HepG2 (cell line): ENCODE measurements at regions of chr11 and their contacts with region 1.

Region 1: DNA sequence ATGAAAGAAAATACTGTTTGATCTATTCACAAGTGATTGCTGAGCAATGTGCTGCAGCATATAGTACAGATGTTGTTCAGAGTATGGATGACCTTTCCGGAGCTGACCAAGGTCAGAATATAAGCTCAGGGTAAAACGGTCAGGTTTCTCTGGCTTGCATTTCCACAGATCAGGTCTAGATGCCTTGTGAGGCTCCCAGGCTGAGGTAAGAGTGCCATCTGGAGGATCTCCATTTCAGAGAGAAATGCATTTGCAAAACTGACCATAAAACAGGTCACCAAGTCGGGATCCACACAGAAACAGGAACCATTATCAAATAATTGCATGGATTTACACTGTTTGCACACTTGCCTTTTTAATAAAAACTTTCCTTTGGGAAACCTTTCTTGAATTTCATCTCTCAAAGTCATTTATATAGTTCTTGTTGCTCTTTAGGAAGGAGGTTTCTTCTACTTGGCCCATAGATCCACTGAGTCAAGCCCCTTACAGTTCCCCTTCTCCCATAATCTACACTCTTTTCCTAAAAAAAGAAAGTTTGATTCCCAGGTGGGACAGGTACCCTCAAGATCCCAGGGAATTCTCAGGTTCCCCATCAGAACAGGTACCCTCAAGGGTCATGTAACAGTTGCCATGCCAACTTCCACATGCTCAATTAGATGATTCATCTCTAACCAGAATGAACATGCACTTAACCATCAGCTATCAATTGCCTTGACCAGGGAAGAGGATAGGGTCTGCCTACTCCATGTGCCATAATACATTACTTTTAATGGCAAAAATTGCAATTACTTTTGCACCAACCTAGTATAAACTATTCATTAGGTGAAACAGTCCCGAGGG is 25.0 kb upstream of the TMPRSS5 start:
- DNase-seq: peak; percentile 47
- ATAC-seq: peak; percentile 87
- H3K4me3 ChIP-seq: no peak overlapping the region
- H3K27ac ChIP-seq: no peak overlapping the region
- H3K4me1 ChIP-seq: peaks cover 3% of the 10 kb centered on the region
- H3K27me3 ChIP-seq: no peaks in the 10 kb centered on the region
- CTCF ChIP-seq: peak; percentile 79
- EP300 ChIP-seq: no peak
- POLR2A ChIP-seq: no peak
- RAD21 ChIP-seq: peak; percentile 55

Region 2: DNA sequence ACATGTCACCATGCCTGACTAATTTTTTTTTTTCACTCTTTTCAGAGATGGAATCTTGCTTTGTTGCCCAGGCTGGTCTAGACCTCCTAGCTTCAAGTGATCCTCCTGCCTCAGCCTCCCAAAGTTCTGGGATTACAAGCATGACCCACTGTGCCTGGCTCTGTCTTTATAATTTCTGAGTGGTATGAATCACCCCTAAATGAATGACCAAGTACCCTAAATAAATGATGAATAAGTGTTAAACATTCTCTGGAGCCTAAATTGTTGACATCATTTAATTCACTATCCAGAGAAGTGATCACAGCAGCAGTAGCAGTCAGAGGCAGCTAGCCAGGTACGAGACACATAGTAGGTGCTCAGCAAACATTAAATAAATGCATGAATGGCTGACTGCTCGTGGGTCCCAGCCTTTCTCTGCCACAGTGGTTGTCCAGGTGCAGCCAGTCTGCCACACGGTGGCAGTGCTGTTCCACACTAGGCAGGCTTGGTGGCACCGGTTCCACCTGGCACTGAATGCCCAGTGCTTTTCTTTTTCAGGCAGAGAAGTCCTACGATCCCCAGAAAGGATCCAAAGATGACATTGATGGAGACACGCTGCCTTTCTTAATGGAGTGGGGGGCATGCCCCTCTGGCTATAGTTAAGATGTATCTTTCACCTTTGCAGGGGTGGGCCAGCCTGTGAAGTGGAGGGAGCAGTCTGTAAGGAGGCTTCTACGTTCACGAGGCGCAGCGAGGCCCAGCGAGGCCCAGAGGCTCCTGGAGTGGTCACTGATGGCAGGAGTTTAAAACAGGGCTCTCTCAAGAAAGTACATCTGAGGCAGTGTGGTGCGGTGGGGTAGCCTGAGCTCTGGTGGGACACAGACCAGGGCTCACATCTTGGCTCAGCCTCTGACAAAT is 425.4 kb before region 1 on chr11:
- CTCF ChIA-PET with region 1: interaction called, 6 read pairs
- POLR2A ChIA-PET with region 1: no interaction called
- in situ Hi-C with region 1: loop called (anchors 5 kb)
- intact Hi-C with region 1: loop called (anchors 1 kb)
- DNase-seq: peak; percentile 32
- ATAC-seq: peak; percentile 94
- H3K4me3 ChIP-seq: no peak overlapping the region
- H3K27ac ChIP-seq: no peak overlapping the region
- H3K4me1 ChIP-seq: no peaks in the 10 kb centered on the region
- H3K27me3 ChIP-seq: no peaks in the 10 kb centered on the region
- CTCF ChIP-seq: peak; percentile 97
- EP300 ChIP-seq: no peak
- POLR2A ChIP-seq: no peak
- RAD21 ChIP-seq: peak; percentile 87

Region 3: DNA sequence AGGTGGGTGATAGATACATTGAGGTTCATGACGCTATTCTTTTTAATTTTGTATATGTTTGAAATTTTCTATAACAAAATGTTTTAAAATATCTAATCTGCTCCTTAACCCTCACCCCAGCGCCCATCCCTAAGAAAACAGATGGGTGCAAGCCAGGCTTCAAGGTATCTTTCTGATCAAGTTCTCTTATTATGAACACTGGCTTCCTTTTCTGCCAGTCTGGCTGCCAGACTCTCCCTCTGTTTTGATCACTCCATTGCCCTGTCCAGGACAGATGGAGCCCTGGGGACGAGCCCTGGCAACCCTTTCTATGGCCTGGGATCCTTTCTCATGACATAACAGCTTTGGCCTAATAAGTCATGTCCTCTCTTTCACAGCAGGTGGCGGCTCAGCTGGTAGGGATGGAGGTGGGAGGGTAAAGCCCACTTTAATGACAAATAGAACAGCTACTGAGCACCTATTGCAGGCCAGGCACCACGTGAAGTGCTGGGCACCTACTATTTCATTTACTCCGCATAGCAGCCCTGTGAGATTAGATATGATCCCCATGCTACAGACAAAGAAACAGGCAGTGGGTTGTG is 294.3 kb before region 1 on chr11:
- CTCF ChIA-PET with region 1: no interaction called
- POLR2A ChIA-PET with region 1: no interaction called
- in situ Hi-C with region 1: no loop called
- intact Hi-C with region 1: loop called (anchors 5 kb)
- DNase-seq: no peak
- ATAC-seq: peak; percentile 31; the same call in 1 of the 3 replicates
- H3K4me3 ChIP-seq: no peak overlapping the region
- H3K27ac ChIP-seq: no peak overlapping the region
- H3K4me1 ChIP-seq: no peaks in the 10 kb centered on the region
- H3K27me3 ChIP-seq: peaks cover 0 to 7% of the 10 kb centered on the region in 2 experiments; a peak in 1 of 5 replicates
- CTCF ChIP-seq: no peak
- EP300 ChIP-seq: no peak
- POLR2A ChIP-seq: no peak
- RAD21 ChIP-seq: no peak

Region 4: DNA sequence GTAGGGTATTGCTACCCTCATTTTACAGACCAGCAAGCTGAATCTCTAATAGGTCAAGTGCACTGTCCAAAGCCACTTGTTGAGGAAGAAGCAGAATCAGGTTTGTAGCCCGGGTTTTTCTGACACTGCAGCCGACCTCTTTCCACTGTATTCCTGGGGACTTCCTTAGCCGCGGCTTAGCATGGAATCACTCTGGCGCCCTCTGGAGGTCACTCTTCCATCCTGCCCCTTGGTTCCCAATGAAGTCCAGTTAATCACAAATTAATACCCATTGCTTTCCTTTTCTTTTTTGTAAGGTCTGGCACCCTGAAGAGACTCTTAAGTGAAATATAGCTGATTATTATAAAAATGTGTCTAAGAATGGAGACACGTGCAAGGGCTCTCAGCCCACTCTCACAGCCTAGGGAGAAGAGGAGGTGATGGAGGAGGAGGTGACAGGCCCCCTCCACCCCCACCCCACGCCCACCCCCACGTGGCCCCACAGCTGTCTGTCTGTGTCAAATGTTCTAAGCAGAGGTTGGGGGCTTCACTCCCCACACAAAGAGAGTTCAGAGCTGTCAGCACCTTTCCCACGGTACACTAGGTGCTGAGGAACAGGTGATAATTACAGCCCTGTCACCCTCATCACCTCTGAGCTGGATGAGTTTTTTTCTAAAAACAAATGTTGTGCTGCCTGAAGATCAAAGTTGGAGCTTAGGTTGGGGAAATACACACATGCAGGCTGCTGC is 198.2 kb before region 1 on chr11:
- CTCF ChIA-PET with region 1: no interaction called
- POLR2A ChIA-PET with region 1: no interaction called
- in situ Hi-C with region 1: loop called (anchors 25 kb)
- intact Hi-C with region 1: loop called (anchors 1 kb)
- DNase-seq: peak; percentile 46
- ATAC-seq: peak; percentile 91
- H3K4me3 ChIP-seq: no peak overlapping the region
- H3K27ac ChIP-seq: no peak overlapping the region
- H3K4me1 ChIP-seq: no peaks in the 10 kb centered on the region
- H3K27me3 ChIP-seq: peaks cover 0 to 14% of the 10 kb centered on the region in 2 experiments; a peak in 2 of 5 replicates
- CTCF ChIP-seq: peak; percentile 78
- EP300 ChIP-seq: no peak
- POLR2A ChIP-seq: no peak
- RAD21 ChIP-seq: peak; percentile 43; the same call in 1 of the 2 replicates

Region 5: GRCh38 chr11:113752932-113753331 is 21.8 kb after region 1 on chr11:
- CTCF ChIA-PET with region 1: no interaction called
- POLR2A ChIA-PET with region 1: no interaction called
- in situ Hi-C with region 1: no loop called
- intact Hi-C with region 1: no loop called
- DNase-seq: no peak
- ATAC-seq: no peak
- H3K4me3 ChIP-seq: no peak overlapping the region
- H3K27ac ChIP-seq: no peak overlapping the region
- H3K4me1 ChIP-seq: no peaks in the 10 kb centered on the region
- H3K27me3 ChIP-seq: no peaks in the 10 kb centered on the region
- CTCF ChIP-seq: no peak
- EP300 ChIP-seq: no peak
- POLR2A ChIP-seq: no peak
- RAD21 ChIP-seq: no peak